ENCODE measurements at regions of chrX and their contacts with region 1.

Region 1: DNA sequence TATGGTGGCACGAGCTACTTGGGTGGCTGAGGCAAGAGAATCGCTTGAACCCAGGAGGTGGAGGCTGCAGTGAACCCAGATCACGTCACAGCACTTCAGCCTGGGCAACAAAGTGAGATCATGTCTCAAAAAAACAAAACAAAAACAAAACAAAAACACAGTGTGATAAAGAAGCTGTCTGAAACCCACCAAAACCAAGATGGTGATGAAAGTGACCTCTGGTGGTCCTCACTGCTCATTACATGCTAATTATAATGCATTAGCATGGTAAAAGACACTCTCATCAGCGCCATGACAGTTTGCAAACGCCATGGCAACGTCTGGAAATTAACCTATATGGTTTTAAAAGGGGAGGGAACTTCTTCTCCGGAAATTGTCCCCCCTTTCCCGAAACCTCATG is 29.4 kb upstream of the OPHN1 start:
- DNase-seq: no peak
- H3K4me3 ChIP-seq: no peak overlapping the region
- H3K27ac ChIP-seq: no peak overlapping the region
- H3K4me1 ChIP-seq: no peaks in the 10 kb centered on the region
- H3K27me3 ChIP-seq: no peaks in the 10 kb centered on the region
- CTCF ChIP-seq: peak; percentile 29 to 48 (median 33)
- EP300 ChIP-seq: no peak
- POLR2A ChIP-seq: no peak

Region 2: DNA sequence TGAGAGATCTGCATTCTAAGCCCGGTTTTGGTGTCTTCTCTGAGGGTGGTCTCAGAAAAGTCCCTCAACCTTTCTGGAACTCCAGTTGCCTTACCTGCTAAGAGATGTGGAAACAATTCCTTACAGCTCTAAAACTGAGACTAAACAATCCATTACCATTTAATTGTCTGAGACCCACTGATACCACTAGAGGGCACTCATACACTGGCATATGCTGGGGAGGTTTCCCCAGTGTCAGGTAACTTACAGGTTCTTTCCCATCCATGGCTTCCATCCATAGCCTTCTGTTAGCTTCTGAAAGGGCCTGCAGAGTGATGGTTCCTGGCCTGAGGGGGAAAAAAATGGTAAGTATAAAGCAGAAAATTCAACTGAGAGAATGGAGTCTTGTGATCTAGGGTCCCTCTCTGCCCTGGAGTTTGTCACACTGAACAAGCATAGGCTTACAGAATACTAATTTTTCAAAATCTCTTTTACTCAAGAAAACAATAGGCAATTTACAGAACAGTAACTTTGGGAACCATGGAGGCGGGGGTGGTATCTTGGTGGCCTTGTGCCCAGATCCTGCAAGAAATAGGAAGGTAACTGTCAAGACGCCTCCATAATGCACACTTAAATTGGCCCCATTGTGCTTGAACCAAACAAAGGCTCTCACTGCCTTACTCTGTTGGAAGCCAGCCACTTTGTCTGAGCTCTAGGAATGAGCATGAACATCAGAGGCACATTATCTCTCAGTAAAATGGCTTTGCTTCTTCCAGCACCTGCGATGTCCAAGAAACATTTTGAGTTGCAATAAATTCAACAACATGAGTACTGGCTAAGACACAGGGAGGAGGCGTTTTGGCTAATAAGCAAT is 265.5 kb before region 1 on chrX:
- in situ Hi-C with region 1: loop called in 3 of 4 experiments (anchors 25 kb)
- intact Hi-C with region 1: loop called (anchors 10 kb)
- DNase-seq: peak; percentile 15
- H3K4me3 ChIP-seq: no peak overlapping the region
- H3K27ac ChIP-seq: no peak overlapping the region
- H3K4me1 ChIP-seq: no peaks in the 10 kb centered on the region
- H3K27me3 ChIP-seq: no peaks in the 10 kb centered on the region
- CTCF ChIP-seq: peak; percentile 53 to 70 (median 54)
- EP300 ChIP-seq: no peak
- POLR2A ChIP-seq: no peak

Region 3: DNA sequence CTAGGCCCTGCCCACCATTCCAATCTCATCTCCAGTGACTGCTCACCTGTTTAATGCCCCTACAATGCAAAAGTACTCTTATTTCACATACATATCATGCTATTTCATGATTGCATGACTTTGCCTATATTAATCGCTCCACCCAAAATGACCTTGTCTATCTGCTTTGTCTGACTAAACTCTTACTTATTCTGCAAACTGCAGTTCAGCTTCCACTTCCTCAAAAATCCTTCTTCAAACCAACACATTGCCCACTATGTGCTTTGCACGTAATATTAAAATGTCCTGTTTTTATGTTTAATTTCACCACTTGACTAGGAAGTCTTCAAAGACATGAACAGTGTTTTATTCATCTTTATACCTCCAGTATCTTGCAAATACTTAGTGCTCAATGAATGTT is 259.0 kb before region 1 on chrX:
- in situ Hi-C with region 1: loop called in 3 of 4 experiments (anchors 25 kb)
- intact Hi-C with region 1: loop called (anchors 10 kb)
- DNase-seq: no peak
- H3K4me3 ChIP-seq: no peak overlapping the region
- H3K27ac ChIP-seq: no peak overlapping the region
- H3K4me1 ChIP-seq: no peaks in the 10 kb centered on the region
- H3K27me3 ChIP-seq: no peaks in the 10 kb centered on the region
- CTCF ChIP-seq: no peak
- EP300 ChIP-seq: no peak
- POLR2A ChIP-seq: no peak

Measured in transverse colon (tissue), 4 donors.